Testis (tissue), 5 donors: ENCODE measurements at regions of chr2 and their contacts with region 1.

Region 1: DNA sequence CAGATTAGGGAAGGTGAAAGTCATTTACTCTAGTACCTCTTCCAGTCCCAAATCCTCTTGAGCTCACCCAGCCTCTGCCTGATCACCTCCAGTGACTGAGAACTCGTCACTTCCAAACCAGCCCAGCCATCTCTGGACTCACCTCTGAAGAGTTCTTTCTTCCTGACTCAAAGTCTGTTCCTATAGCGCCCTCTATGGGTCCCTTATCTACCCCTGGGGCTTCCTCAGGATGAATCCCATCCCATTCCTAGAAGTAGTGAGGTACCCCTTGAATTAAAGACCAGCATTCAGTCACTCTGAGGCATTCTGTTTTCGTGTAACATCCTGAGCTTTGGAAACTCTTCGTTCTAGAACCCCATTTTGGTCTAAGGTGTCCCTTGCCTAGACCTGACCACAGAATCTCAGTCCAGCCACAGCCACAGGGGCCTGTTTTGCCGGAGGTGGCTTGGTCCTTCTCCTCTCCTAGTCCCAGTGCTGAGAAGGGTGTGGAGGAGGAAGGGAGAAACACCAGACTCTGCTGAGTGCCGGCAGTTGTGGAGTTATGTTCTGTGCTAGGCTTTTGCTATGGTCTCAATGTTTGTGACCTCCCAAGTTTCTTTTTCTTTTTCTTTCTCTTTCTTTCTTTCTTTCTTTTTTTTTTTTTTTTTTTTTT is 32.7 kb downstream of the SIX3 start:
- DNase-seq: peak; percentile 46
- H3K4me3 ChIP-seq: no peak overlapping the region
- H3K27ac ChIP-seq: no peak overlapping the region
- H3K4me1 ChIP-seq: no peaks in the 10 kb centered on the region
- H3K27me3 ChIP-seq: no peaks in the 10 kb centered on the region
- CTCF ChIP-seq: peak in 1 of 3 experiments; percentile 14
- POLR2A ChIP-seq: no peak

Region 2: DNA sequence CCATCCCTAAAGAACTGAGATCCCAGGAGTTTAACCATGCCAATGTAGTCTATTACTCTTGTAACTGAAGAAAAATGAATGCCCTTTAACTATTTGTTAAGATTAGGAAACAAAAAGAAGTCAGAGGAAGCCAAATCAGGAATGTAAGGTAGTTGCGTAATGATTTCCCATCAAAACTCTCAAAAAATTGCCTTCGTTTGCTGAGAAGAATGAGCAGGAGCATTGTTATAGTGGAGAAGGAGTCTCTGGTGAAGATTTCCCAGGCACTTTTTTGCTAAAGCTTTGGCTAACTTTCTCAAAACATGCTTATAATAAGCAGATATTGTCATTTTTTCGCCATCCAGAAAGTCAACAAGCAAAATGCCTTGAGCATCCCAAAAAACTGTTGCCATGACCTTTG is 259.1 kb after region 1 on chr2:
- intact Hi-C with region 1: no loop called
- DNase-seq: no peak
- H3K4me3 ChIP-seq: no peak overlapping the region
- H3K27ac ChIP-seq: no peak overlapping the region
- H3K4me1 ChIP-seq: no peaks in the 10 kb centered on the region
- H3K27me3 ChIP-seq: no peaks in the 10 kb centered on the region
- CTCF ChIP-seq: no peak
- POLR2A ChIP-seq: no peak

Region 3: DNA sequence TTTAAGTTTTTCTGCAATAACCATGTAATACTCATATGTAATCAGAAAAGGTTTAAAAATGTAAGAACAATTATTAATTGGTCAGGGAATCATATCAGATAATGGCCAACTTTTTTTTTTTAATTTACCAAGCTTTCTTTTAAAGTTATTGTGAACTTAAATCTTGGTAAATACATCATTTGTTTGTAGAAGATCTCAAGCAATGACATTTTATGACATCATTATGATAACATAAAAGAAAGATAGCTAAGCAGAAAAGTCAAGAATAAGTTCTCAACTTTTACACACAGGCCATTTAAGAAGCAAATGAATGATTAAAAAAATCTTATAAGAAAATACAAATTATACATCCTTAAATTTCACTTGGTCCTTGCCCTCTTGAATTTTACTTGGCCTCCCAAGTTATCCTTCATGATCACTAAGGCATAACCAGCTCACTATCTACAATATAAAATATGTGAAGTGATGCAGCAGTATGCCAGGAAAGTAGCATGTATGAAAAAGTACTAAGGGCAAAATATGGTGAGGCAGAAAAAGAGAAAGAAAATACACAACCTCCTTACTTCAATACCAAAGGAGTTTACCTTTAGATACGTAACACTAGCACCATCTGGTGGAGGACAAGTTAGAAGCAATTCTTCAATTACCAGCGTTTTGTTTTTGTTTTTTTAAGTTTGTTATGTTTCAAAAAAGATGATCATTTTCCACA is 520.2 kb after region 1 on chr2:
- intact Hi-C with region 1: loop called (anchors 10 kb)
- DNase-seq: no peak
- H3K4me3 ChIP-seq: no peak overlapping the region
- H3K27ac ChIP-seq: no peak overlapping the region
- H3K4me1 ChIP-seq: no peaks in the 10 kb centered on the region
- H3K27me3 ChIP-seq: no peaks in the 10 kb centered on the region
- CTCF ChIP-seq: peak; percentile 66 to 70 (median 67)
- POLR2A ChIP-seq: no peak